B cell (primary cell): ENCODE measurements at regions of chr17 and their contacts with region 1.

Region 1: GRCh38 chr17:57849874-57850754 is at the start of gene MRPS23:
- DNase-seq: peak; percentile 97
- ATAC-seq: peak; percentile 95
- H3K4me3 ChIP-seq: peak within 1 kb of the TSS; percentile 64 to 96 (median 85)
- H3K4me3 Mint-ChIP-seq: peak within 1 kb of the TSS; percentile 99
- H3K27ac ChIP-seq: peak within 1 kb of the TSS; percentile 86 to 92
- H3K27ac Mint-ChIP-seq: peak within 1 kb of the TSS; percentile 100
- H3K4me1 ChIP-seq: peaks cover 17 to 28% of the 10 kb centered on the region in 2 donors
- H3K4me1 Mint-ChIP-seq: peaks cover 39% of the 10 kb centered on the region
- H3K27me3 ChIP-seq: no peaks in the 10 kb centered on the region
- H3K27me3 Mint-ChIP-seq: no peaks in the 10 kb centered on the region
- CTCF ChIP-seq: no peak
- total RNA-seq, gene MRPS23: 25.4 and 32.3 TPM in 2 replicates

Region 2: GRCh38 chr17:57833179-57833939 is 16.8 kb before region 1 on chr17:
- CTCF ChIA-PET with region 1: interaction called, 25 read pairs
- POLR2A ChIA-PET with region 1: interaction called, 4 read pairs
- intact Hi-C with region 1: no loop called
- DNase-seq: peak; percentile 81
- ATAC-seq: peak; percentile 62
- H3K4me3 ChIP-seq: peak overlapping the region; percentile 36 to 83 (median 58)
- H3K4me3 Mint-ChIP-seq: no peak overlapping the region
- H3K27ac ChIP-seq: no peak overlapping the region
- H3K27ac Mint-ChIP-seq: no peak overlapping the region
- H3K4me1 ChIP-seq: peaks cover 8 to 12% of the 10 kb centered on the region in 2 donors
- H3K4me1 Mint-ChIP-seq: peaks cover 2% of the 10 kb centered on the region
- H3K27me3 ChIP-seq: no peaks in the 10 kb centered on the region
- H3K27me3 Mint-ChIP-seq: no peaks in the 10 kb centered on the region
- CTCF ChIP-seq: peak; percentile 96

Region 3: DNA sequence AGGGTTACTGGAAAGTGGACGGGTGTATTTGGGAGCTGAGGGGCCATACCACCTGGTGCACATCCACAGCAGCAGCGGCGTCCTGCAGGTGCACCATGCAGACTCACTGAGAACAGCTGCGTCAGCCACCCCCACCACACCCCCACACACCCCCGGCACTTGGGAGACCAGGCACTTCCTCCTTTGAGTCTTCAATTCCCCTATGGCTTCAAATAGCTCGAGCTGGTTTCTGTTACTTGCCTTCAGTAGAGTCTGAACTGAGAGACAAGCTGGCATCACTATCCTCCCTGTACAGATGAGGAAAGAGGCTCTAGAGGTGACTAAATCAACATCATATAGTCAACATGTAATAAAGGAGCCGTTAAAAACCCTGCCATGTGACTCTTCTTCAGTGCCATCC is 89.7 kb after region 1 on chr17:
- CTCF ChIA-PET with region 1: no interaction called
- POLR2A ChIA-PET with region 1: no interaction called
- intact Hi-C with region 1: loop called (anchors 5 kb)
- DNase-seq: peak; percentile 91
- ATAC-seq: peak; percentile 94
- H3K4me3 ChIP-seq: peak overlapping the region in 1 of 5 experiments; percentile 15
- H3K4me3 Mint-ChIP-seq: peak overlapping the region; percentile 67
- H3K27ac ChIP-seq: no peak overlapping the region
- H3K27ac Mint-ChIP-seq: peak overlapping the region; percentile 63
- H3K4me1 ChIP-seq: peaks cover 26 to 33% of the 10 kb centered on the region in 2 donors
- H3K4me1 Mint-ChIP-seq: peaks cover 32% of the 10 kb centered on the region
- H3K27me3 ChIP-seq: peaks cover 0 to 71% (median 36%) of the 10 kb centered on the region in 4 experiments
- H3K27me3 Mint-ChIP-seq: peaks cover 49% of the 10 kb centered on the region
- CTCF ChIP-seq: no peak

Region 4: GRCh38 chr17:58006924-58007780 is 157.0 kb after region 1 on chr17 and contains the start of gene SRSF1:
- CTCF ChIA-PET with region 1: interaction called, 468 read pairs
- POLR2A ChIA-PET with region 1: interaction called, 10 read pairs
- intact Hi-C with region 1: loop called (anchors 1 kb)
- DNase-seq: peak; percentile 99
- ATAC-seq: peak; percentile 87
- H3K4me3 ChIP-seq: peak within 1 kb of the TSS; percentile 83 to 100 (median 96)
- H3K4me3 Mint-ChIP-seq: peak within 1 kb of the TSS; percentile 100
- H3K27ac ChIP-seq: peak within 1 kb of the TSS; percentile 93 to 95
- H3K27ac Mint-ChIP-seq: peak within 1 kb of the TSS; percentile 100
- H3K4me1 ChIP-seq: peaks cover 25 to 38% of the 10 kb centered on the region in 2 donors
- H3K4me1 Mint-ChIP-seq: peaks cover 46% of the 10 kb centered on the region
- H3K27me3 ChIP-seq: no peaks in the 10 kb centered on the region
- H3K27me3 Mint-ChIP-seq: no peaks in the 10 kb centered on the region
- CTCF ChIP-seq: no peak
- total RNA-seq, gene SRSF1: 221 and 250 TPM in 2 replicates

Region 5: GRCh38 chr17:58219001-58219788 is 369.1 kb after region 1 on chr17 and contains the start of gene MKS1:
- CTCF ChIA-PET with region 1: no interaction called
- POLR2A ChIA-PET with region 1: no interaction called
- intact Hi-C with region 1: loop called (anchors 10 kb)
- DNase-seq: peak; percentile 95
- ATAC-seq: peak; percentile 97
- H3K4me3 ChIP-seq: peak within 1 kb of the TSS; percentile 38 to 84 (median 68)
- H3K4me3 Mint-ChIP-seq: peak within 1 kb of the TSS; percentile 94
- H3K27ac ChIP-seq: peak within 1 kb of the TSS; percentile 70 to 86
- H3K27ac Mint-ChIP-seq: peak within 1 kb of the TSS; percentile 83
- H3K4me1 ChIP-seq: peaks cover 10 to 19% of the 10 kb centered on the region in 2 donors
- H3K4me1 Mint-ChIP-seq: peaks cover 34% of the 10 kb centered on the region
- H3K27me3 ChIP-seq: no peaks in the 10 kb centered on the region
- H3K27me3 Mint-ChIP-seq: peaks cover 2% of the 10 kb centered on the region
- CTCF ChIP-seq: peak; percentile 75
- total RNA-seq, gene MKS1: 16.3 and 19.6 TPM in 2 replicates